ENCODE measurements at regions of chr15 and their contacts with region 1.

Region 1: GRCh38 chr15:68795298-68795848 is 25.3 kb downstream of the ANP32A start:
- DNase-seq: peak; percentile 73
- H3K4me3 Mint-ChIP-seq: peak overlapping the region; percentile 73
- H3K27ac Mint-ChIP-seq: peak overlapping the region; percentile 87
- H3K4me1 Mint-ChIP-seq: peaks cover 98% of the 10 kb centered on the region
- H3K27me3 Mint-ChIP-seq: no peaks in the 10 kb centered on the region

Region 2: DNA sequence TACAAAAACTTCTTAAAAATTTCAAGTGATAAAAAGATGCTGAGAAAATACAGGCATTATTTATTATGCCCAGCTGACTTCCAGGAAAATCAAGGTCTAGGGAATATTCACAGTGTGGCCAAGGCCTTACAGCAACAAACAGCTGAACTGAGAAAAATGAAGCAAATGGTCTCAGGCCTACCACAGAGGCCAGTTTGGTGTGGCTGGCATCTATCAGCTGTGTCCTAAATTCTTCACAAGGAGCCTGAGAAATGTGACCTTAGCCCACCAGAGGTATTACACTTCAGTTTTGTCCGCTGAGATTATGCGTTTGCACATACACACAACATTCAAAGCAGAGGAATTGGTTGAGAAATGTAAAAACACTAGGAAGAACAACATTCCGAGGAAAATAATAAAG is 52.1 kb before region 1 on chr15:
- intact Hi-C with region 1: no loop called
- DNase-seq: no peak
- H3K4me3 Mint-ChIP-seq: no peak overlapping the region
- H3K27ac Mint-ChIP-seq: no peak overlapping the region
- H3K4me1 Mint-ChIP-seq: no peaks in the 10 kb centered on the region
- H3K27me3 Mint-ChIP-seq: peaks cover 19% of the 10 kb centered on the region

Region 3: GRCh38 chr15:68755731-68756130 is 39.6 kb before region 1 on chr15:
- intact Hi-C with region 1: loop called (anchors 1 kb)
- DNase-seq: no peak
- H3K4me3 Mint-ChIP-seq: no peak overlapping the region
- H3K27ac Mint-ChIP-seq: no peak overlapping the region
- H3K4me1 Mint-ChIP-seq: peaks cover 7% of the 10 kb centered on the region
- H3K27me3 Mint-ChIP-seq: peaks cover 18% of the 10 kb centered on the region

Region 4: DNA sequence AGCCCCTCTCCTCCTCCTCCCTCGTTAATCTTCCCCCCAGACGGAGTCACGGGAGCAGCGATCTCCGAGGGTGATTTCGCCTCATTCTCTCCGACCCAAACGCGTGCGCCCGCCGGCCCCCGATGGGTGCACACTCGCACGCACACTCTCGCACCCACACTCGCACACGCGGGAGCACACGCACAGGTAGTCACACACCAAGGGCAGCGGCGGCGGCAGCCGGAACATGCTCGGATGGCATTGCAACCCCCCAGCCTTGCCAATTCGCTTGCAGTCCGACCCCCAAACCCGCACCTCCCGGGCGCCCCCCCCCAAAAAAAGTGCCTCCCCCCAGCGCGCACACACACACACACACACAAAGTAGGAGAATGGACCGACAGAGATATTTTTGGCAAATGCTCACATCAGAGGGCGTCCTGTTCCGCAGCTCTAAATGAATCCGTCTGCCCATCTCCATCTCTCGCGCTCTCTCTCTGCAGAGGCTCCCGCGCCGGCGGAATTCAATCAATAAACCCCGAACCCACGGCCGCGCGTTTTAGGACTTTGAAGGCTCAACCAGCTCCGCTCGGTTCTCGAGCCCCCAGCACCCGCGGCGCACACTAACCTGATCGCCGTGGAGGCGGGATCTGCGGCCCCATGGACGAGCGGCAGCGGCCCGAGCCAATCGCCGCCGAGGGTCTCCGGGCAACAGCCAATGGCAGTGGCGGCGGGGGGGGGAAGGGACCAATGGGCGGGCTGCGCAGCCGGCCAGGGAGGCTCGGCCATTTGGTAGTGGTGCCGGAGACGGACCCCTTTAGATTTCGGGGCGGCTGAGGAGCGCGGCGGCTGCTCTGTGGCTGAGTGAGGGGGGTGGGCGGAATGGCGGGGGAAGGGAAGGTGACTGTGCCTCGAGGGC is 25.2 kb after region 1 on chr15 and contains the start of gene ANP32A:
- intact Hi-C with region 1: loop called (anchors 1 kb)
- DNase-seq: peak; percentile 94
- H3K4me3 Mint-ChIP-seq: peak within 1 kb of the TSS; percentile 98
- H3K27ac Mint-ChIP-seq: peak within 1 kb of the TSS; percentile 100
- H3K4me1 Mint-ChIP-seq: peaks cover 40% of the 10 kb centered on the region
- H3K27me3 Mint-ChIP-seq: no peaks in the 10 kb centered on the region
- total RNA-seq, gene ANP32A: 275 TPM in 2 replicates

Region 5: GRCh38 chr15:68829068-68829467 is 33.7 kb after region 1 on chr15:
- intact Hi-C with region 1: loop called (anchors 5 kb)
- DNase-seq: no peak
- H3K4me3 Mint-ChIP-seq: no peak overlapping the region
- H3K27ac Mint-ChIP-seq: no peak overlapping the region
- H3K4me1 Mint-ChIP-seq: peaks cover 21% of the 10 kb centered on the region
- H3K27me3 Mint-ChIP-seq: peaks cover 5% of the 10 kb centered on the region

Measured in activated T-helper 1 cell treated with anti-CD3 and anti-CD28 coated beads, Interleukin-12 subunit alpha, Interleukin-12 subunit beta, Interleukin-2, Interleukin-4 antibody, amounts not matched to agents 30 ng/mL and 10 ng/mL and 1 ng/mL, durations not matched to agents 14 hours and 24 hours and 36 hours (primary cell).